Activated B cell treated with CpG ODN at 0.5 μM for 24 hours (primary cell): ENCODE measurements at regions of chr1 and their contacts with region 1.

Region 1: GRCh38 chr1:160251687-160252526 is 10.4 kb downstream of the DCAF8 start:
- DNase-seq: no peak
- ATAC-seq: peak; percentile 98
- H3K4me3 Mint-ChIP-seq: no peak overlapping the region
- H3K27ac Mint-ChIP-seq: peak overlapping the region; percentile 50
- H3K4me1 Mint-ChIP-seq: peaks cover 8% of the 10 kb centered on the region
- H3K27me3 Mint-ChIP-seq: no peaks in the 10 kb centered on the region
- CTCF ChIP-seq: peak; percentile 36

Region 2: DNA sequence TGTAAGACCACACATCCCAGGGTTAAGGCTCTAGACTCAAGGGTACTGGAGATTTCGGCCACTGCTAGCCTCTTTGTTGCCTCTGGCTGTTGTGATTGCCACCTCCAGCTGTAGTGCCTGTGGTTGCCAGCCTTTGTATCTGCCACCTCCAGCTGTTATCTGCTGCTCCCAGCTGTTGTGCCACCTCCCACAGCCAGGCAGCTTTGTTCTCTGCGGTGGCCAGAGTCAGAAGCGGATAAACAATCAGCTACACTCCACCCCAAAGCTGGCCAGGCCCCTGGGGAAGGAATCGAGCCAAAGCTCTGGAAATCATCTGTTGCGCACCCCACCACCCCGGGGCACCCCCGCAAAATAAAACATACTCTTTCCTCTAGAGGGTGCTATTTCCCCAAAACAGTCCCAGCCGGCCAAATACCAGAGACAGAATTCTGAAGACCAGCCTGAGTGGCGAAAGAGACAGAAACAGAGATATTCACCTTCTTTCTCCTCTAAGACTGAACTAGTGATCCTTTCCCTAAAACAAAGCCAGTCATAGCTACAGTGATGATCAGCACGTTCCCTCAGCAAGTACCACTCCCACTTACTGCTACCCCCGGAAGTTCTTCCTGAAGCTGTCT is 205.3 kb before region 1 on chr1:
- CTCF ChIA-PET with region 1: interaction called, 3 read pairs
- POLR2A ChIA-PET with region 1: no interaction called
- intact Hi-C with region 1: loop called (anchors 2 kb)
- DNase-seq: no peak
- ATAC-seq: peak; percentile 79
- H3K4me3 Mint-ChIP-seq: peak overlapping the region; percentile 72
- H3K27ac Mint-ChIP-seq: peak overlapping the region; percentile 6
- H3K4me1 Mint-ChIP-seq: peaks cover 12% of the 10 kb centered on the region
- H3K27me3 Mint-ChIP-seq: peaks cover 26% of the 10 kb centered on the region
- CTCF ChIP-seq: no peak

Region 3: GRCh38 chr1:160085686-160086455 is 166.0 kb before region 1 on chr1:
- CTCF ChIA-PET with region 1: interaction called, 22 read pairs
- POLR2A ChIA-PET with region 1: no interaction called
- intact Hi-C with region 1: loop called (anchors 1 kb)
- DNase-seq: peak; percentile 60
- ATAC-seq: peak; percentile 68
- H3K4me3 Mint-ChIP-seq: no peak overlapping the region
- H3K27ac Mint-ChIP-seq: no peak overlapping the region
- H3K4me1 Mint-ChIP-seq: peaks cover 14% of the 10 kb centered on the region
- H3K27me3 Mint-ChIP-seq: peaks cover 16% of the 10 kb centered on the region
- CTCF ChIP-seq: no peak

Region 4: DNA sequence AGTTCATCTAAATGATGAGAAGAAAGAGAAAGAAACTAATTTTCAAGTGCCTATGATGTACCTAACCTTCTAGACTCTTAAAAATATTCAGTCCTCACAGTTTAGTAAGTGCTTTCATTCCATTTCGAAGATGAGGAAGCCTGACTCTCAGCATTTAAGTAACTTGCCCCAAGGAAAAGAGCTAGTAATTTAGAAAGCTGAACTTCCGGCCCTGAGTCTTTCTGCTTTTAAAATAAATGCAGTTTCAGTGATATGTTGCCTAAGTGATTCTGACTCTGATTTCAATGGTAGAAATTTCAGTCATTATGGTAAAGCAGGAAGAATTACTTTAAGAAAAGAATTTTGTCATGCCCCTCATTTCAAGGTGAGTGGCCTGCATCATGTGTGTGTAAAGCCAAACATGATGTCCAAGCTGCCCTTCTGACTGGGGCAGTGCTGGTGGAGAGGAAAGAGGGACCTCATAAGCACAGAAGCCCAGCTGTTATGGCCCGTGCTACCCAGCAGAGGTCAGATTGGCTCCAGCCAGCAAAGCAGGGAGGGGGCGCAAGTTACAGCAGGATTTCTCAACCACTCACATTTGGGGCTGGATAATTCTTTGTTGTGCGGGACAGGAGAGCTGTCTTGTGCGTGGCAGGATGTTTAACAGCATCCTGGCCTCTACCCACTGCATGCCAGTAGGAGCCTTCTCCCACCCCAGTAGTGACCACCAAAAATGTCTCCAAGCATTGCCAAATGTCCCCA is 89.8 kb before region 1 on chr1:
- CTCF ChIA-PET with region 1: interaction called, 5 read pairs
- POLR2A ChIA-PET with region 1: interaction called, 3 read pairs
- intact Hi-C with region 1: loop called (anchors 1 kb)
- DNase-seq: no peak
- ATAC-seq: peak; percentile 25
- H3K4me3 Mint-ChIP-seq: no peak overlapping the region
- H3K27ac Mint-ChIP-seq: no peak overlapping the region
- H3K4me1 Mint-ChIP-seq: peaks cover 2% of the 10 kb centered on the region
- H3K27me3 Mint-ChIP-seq: no peaks in the 10 kb centered on the region
- CTCF ChIP-seq: no peak

Region 5: DNA sequence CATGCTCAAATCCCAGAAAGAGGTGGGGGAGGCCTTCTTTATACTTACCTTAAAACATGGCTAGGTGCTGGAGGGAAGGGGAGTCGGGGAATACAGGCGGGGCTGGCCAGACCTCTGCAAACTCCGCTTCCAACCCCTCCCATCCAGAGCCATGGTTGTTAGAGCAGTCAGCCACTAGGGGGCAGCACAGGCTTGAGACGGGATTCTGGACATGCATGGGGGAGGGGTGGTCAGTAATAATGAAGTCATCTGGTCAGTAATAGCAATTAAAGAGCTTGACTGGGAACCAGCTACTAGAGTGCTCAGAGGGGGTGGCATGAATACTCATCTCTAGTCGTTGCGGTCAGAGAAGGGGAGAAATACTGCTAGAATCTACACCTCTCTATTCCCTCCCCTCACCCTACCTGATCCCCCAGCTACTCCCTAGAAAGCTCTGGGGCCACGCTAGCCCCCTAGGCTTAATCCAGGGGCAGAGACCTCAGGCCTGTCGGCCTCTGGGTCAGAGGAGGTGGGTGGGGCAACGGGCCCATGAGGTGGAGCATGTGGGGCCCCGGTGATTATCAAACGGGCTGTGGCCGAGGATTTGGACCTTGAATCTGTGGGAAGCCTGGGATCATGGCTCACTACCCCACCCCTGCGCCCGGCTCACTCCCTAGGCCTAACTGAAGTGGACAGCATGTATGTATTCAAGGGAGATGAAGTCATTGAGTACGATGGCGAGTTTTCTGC is 58.7 kb before region 1 on chr1:
- CTCF ChIA-PET with region 1: interaction called, 109 read pairs
- POLR2A ChIA-PET with region 1: interaction called, 4 read pairs
- intact Hi-C with region 1: loop called (anchors 1 kb)
- DNase-seq: peak; percentile 72
- ATAC-seq: peak; percentile 95
- H3K4me3 Mint-ChIP-seq: no peak overlapping the region
- H3K27ac Mint-ChIP-seq: no peak overlapping the region
- H3K4me1 Mint-ChIP-seq: peaks cover 3% of the 10 kb centered on the region
- H3K27me3 Mint-ChIP-seq: no peaks in the 10 kb centered on the region
- CTCF ChIP-seq: peak; percentile 43

Region 6: GRCh38 chr1:160238408-160238807 is 13.5 kb before region 1 on chr1:
- CTCF ChIA-PET with region 1: interaction called, 18 read pairs
- POLR2A ChIA-PET with region 1: no interaction called
- intact Hi-C with region 1: no loop called
- DNase-seq: no peak
- ATAC-seq: no peak
- H3K4me3 Mint-ChIP-seq: no peak overlapping the region
- H3K27ac Mint-ChIP-seq: no peak overlapping the region
- H3K4me1 Mint-ChIP-seq: peaks cover 11% of the 10 kb centered on the region
- H3K27me3 Mint-ChIP-seq: no peaks in the 10 kb centered on the region
- CTCF ChIP-seq: no peak

Region 7: GRCh38 chr1:160261893-160262794 is 10.2 kb after region 1 on chr1 and contains the start of gene DCAF8:
- CTCF ChIA-PET with region 1: interaction called, 16 read pairs
- POLR2A ChIA-PET with region 1: interaction called, 26 read pairs
- intact Hi-C with region 1: no loop called
- DNase-seq: peak; percentile 95
- ATAC-seq: peak; percentile 91
- H3K4me3 Mint-ChIP-seq: peak within 1 kb of the TSS; percentile 99
- H3K27ac Mint-ChIP-seq: peak within 1 kb of the TSS; percentile 98
- H3K4me1 Mint-ChIP-seq: peaks cover 47% of the 10 kb centered on the region
- H3K27me3 Mint-ChIP-seq: no peaks in the 10 kb centered on the region
- CTCF ChIP-seq: no peak
- total RNA-seq, gene DCAF8: 155 and 172 TPM in 2 replicates

Region 8: DNA sequence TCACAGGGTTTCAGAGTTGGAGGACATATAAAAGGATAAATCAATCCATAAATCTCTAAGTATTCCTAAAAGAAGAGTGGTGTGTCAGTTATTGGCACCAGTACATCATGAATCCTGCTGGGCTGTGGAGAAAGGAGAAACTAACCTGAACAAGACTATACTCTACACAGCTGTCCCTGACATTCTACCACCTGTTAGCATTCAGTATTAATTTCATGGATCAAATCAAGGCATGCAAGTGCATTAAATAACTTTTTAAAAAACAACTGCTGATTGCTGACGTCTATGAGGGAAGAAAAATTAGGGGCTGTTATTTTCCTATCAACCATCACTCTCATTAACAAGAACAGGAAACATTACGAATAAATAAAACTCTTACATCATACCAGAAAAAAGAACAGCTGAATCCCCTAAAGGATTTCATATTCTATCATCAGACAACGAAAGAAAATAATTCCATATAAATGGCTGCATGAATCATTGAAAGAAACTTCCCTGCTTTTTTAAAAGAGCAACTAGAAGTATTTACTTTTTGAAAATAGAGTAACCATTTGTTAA is 1635.9 kb after region 1 on chr1:
- CTCF ChIA-PET with region 1: no interaction called
- POLR2A ChIA-PET with region 1: no interaction called
- intact Hi-C with region 1: no loop called
- DNase-seq: no peak
- ATAC-seq: no peak
- H3K4me3 Mint-ChIP-seq: no peak overlapping the region
- H3K27ac Mint-ChIP-seq: no peak overlapping the region
- H3K4me1 Mint-ChIP-seq: no peaks in the 10 kb centered on the region
- H3K27me3 Mint-ChIP-seq: no peaks in the 10 kb centered on the region
- CTCF ChIP-seq: no peak